ENCODE measurements at regions of chr12 and their contacts with region 1.

Region 1: GRCh38 chr12:6778574-6779550 is 6.5 kb downstream of the LAG3 start:
- DNase-seq: peak; percentile 81
- ATAC-seq: peak; percentile 98
- H3K4me3 ChIP-seq: peak overlapping the region in 1 of 2 experiments; percentile 32; a peak in 1 of 4 replicates
- H3K27ac ChIP-seq: peak overlapping the region; percentile 51
- H3K4me1 ChIP-seq: peaks cover 11 to 14% of the 10 kb centered on the region in 2 experiments; a peak in 3 of 4 replicates
- H3K27me3 ChIP-seq: no peaks in the 10 kb centered on the region
- CTCF ChIP-seq: peak; percentile 95
- POLR2A ChIP-seq: no peak
- RAD21 ChIP-seq: peak; percentile 99

Region 2: DNA sequence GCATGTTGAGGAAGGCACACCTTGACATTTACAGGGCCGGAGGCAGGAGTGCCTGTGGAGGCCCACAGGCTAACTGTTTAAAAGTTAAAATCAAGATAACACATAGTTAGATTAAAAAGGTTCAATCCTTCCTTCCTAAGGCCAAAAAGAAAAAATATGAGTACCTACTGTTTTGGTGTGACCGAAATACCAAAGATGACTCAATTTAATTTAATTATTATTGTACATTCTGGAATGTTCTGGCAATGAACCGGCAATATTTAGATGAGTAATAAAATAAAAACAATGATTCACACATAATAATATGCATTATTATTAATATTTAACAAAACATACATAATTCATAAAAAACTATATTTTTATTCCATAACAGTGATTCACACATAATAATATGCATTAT is 1483.7 kb before region 1 on chr12:
- CTCF ChIA-PET with region 1: no interaction called
- POLR2A ChIA-PET with region 1: no interaction called
- RAD21 ChIA-PET with region 1: no interaction called
- intact Hi-C with region 1: no loop called
- DNase-seq: no peak
- ATAC-seq: no peak
- H3K4me3 ChIP-seq: no peak overlapping the region
- H3K27ac ChIP-seq: no peak overlapping the region
- H3K4me1 ChIP-seq: peaks cover 6 to 11% of the 10 kb centered on the region in 2 experiments; a peak in 2 of 4 replicates
- H3K27me3 ChIP-seq: no peaks in the 10 kb centered on the region
- CTCF ChIP-seq: no peak
- POLR2A ChIP-seq: no peak
- RAD21 ChIP-seq: no peak

Region 3: DNA sequence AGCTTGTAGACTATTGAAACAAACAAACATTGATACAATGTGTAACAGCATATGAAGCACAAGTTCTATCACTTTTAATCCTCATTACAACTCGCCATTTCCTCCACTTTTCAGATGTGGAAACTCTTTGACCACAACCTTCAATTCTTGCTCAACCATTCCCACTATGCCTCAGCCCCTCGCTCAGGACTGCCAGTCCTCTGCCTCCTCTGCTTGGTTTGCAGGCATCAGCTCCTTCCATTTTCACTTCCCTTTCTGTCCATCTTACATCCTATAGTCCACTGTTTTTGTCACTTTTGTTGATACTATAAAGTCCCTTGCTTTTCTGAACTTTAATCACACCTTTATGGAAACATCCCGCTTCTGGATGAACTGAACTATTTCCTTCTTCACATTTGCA is 362.3 kb before region 1 on chr12:
- CTCF ChIA-PET with region 1: no interaction called
- POLR2A ChIA-PET with region 1: no interaction called
- RAD21 ChIA-PET with region 1: no interaction called
- intact Hi-C with region 1: no loop called
- DNase-seq: no peak
- ATAC-seq: no peak
- H3K4me3 ChIP-seq: no peak overlapping the region
- H3K27ac ChIP-seq: no peak overlapping the region
- H3K4me1 ChIP-seq: no peaks in the 10 kb centered on the region
- H3K27me3 ChIP-seq: no peaks in the 10 kb centered on the region
- CTCF ChIP-seq: no peak
- POLR2A ChIP-seq: no peak
- RAD21 ChIP-seq: no peak

Region 4: GRCh38 chr12:6613776-6614512 is 164.9 kb before region 1 on chr12:
- CTCF ChIA-PET with region 1: no interaction called
- POLR2A ChIA-PET with region 1: no interaction called
- RAD21 ChIA-PET with region 1: no interaction called
- intact Hi-C with region 1: loop called (anchors 1 kb)
- DNase-seq: peak; percentile 95
- ATAC-seq: peak; percentile 74
- H3K4me3 ChIP-seq: no peak overlapping the region; a peak in 1 of 4 replicates
- H3K27ac ChIP-seq: peak overlapping the region; percentile 97
- H3K4me1 ChIP-seq: peaks cover 38 to 45% of the 10 kb centered on the region in 2 experiments
- H3K27me3 ChIP-seq: no peaks in the 10 kb centered on the region
- CTCF ChIP-seq: peak in 2 of 3 experiments; percentile 27 to 34; a peak in 3 of 6 replicates
- POLR2A ChIP-seq: no peak
- RAD21 ChIP-seq: no peak

Region 5: DNA sequence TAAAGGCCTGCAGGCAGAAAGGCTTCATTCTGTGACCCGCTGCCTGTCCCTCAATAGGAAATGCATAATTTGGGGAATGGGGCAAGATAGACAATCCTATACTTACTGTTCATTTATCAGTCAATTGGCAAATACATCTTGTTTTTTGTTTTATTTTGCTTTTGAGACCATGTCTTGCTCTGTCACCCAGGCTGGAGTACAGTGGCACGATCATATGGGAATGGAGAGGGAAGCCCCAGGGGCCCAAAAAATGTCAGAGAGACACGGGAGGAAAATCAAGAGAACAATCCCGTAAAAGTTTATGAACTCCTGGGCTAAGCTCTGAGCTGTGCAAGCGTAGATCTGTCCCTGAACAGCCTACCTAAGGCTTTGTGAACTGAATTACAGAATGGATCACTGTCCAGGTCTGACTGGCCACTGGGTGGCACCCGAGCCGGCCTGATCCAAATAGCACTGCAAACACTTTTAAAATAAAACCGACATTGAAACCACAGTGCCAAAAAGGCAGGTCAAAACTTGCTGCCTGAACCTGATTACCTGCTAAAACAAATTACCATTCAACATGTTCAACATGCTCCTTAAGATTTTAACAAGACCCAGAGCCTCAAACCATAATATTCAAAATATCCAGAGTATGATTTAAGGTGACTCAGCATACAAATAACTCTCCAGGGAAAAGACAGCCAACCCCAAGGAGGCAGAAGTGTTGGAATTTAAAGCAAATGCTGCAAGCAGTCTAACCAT is 43.2 kb before region 1 on chr12:
- CTCF ChIA-PET with region 1: interaction called, 3 read pairs
- POLR2A ChIA-PET with region 1: interaction called, 3 read pairs
- RAD21 ChIA-PET with region 1: no interaction called
- intact Hi-C with region 1: loop called (anchors 1 kb)
- DNase-seq: no peak
- ATAC-seq: peak; percentile 97
- H3K4me3 ChIP-seq: no peak overlapping the region
- H3K27ac ChIP-seq: peak overlapping the region; percentile 63; the same call in 1 of the 2 replicates
- H3K4me1 ChIP-seq: peaks cover 4 to 10% of the 10 kb centered on the region in 2 experiments
- H3K27me3 ChIP-seq: no peaks in the 10 kb centered on the region
- CTCF ChIP-seq: peak; percentile 85 to 86 (median 86)
- POLR2A ChIP-seq: no peak
- RAD21 ChIP-seq: peak; percentile 81

Measured in HCT116 (cell line).